WTC11 (cell line): ENCODE measurements at regions of chr9 and their contacts with region 1.

Region 1: DNA sequence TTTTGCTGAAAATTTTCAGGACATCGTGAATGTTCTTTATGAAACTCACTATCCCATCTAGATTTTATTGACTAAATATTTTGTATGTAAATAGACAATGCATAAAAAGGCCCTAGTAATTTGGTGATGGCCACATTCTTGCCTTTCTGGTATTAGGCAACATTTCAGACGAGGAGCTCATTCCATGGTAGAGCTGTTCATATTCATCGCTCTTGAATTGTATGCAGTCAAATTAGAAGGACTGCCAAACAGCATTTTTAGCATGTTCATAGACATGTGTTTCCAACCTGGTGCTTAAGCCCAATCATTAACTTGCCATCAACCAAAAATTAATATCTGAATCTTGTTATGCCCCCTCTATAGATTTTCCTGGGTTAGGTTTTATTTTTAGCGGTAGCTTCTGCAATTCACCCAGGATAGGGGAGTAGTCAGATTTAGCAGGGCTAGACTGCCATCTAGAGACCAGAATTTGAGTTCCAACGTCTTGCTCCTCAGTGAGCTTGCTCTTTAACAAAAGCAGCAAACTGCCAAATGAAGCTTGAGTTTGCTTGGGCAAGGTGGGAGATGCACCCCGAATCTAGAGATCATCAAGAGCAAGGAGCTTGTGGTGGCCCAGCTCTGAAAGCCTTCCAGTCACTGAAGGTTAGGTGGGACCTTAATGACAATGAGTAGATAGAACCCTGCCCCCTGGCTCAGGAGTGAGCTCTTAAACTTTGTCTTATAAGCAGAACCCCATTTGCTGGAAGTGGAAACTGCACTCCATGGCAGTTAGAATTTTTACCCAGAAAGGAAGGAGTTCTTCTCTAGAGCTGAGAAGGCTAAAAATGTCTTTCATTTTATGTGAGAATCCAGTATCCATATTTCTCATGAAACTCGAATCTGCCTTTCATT is 456.2 kb downstream of the RASEF start:
- DNase-seq: peak; percentile 48
- ATAC-seq: peak; percentile 96
- H3K4me3 Mint-ChIP-seq: no peak overlapping the region
- H3K27ac Mint-ChIP-seq: no peak overlapping the region
- H3K4me1 Mint-ChIP-seq: peaks cover 15% of the 10 kb centered on the region
- H3K27me3 Mint-ChIP-seq: no peaks in the 10 kb centered on the region
- CTCF ChIP-seq: 0 out of 2 replicates have a peak, but pooled peaks have one; percentile 30

Region 2: DNA sequence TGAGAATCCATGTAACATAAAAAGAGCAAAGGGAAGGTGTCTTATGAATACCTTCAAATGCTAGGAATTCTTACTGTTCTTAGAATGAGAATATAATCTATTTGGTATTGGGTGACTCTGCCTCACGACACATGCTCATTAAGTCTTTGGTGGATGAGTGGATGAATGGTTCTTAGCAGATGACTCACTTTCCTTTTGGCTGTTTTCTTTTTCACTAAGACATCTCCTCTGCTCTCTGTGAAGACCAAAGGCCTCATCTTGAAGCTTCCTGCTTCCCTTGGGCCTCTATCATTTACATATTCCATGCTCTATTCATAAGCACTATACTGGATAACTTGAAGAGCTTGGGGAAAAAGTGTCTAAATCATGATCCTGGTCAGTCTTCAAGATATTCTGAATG is 150.1 kb before region 1 on chr9:
- CTCF ChIA-PET with region 1: interaction called, 15 read pairs
- POLR2A ChIA-PET with region 1: no interaction called
- DNase-seq: no peak
- ATAC-seq: no peak
- H3K4me3 Mint-ChIP-seq: no peak overlapping the region
- H3K27ac Mint-ChIP-seq: no peak overlapping the region
- H3K4me1 Mint-ChIP-seq: peaks cover 14% of the 10 kb centered on the region
- H3K27me3 Mint-ChIP-seq: no peaks in the 10 kb centered on the region
- CTCF ChIP-seq: no peak

Region 3: DNA sequence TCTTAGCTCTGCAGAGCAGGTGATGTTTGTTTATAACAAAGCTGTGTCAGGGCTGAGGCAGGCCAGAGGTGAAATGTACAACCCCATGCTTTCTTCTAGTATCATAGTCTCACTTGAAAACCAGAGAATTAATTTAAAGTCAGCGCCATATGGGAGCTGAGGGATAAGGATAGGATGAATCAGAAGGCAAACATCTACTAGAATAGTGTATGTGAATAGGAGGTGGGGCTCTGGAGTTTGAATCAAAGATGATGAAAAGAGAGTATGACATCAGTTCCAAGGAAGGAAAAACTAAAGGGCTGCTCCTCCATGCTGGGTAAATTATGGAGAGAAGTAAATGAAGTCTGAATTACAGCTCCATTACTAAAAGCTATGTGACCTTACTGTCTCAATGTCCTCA is 14.7 kb after region 1 on chr9:
- CTCF ChIA-PET with region 1: interaction called, 22 read pairs
- POLR2A ChIA-PET with region 1: no interaction called
- DNase-seq: no peak
- ATAC-seq: no peak
- H3K4me3 Mint-ChIP-seq: no peak overlapping the region
- H3K27ac Mint-ChIP-seq: no peak overlapping the region
- H3K4me1 Mint-ChIP-seq: no peaks in the 10 kb centered on the region
- H3K27me3 Mint-ChIP-seq: no peaks in the 10 kb centered on the region
- CTCF ChIP-seq: no peak

Region 4: DNA sequence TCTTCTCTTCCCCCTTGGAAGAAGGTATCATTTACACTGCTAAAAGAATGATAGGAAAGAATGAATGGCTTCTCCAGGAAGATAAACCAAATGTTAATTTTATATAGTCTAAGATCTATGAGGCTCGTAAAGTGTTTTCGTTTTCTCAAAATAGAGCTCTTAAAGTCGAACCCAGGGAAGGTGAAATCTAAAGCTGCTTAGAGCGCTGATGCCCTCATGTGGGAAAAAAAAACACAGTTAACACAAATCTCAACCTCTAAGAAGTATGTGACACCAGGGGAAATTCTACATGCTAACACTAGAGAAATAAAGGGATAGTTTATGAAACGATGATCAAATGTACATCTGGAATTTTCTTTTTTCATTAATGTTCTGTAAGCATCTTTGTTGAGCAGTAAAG is 198.3 kb after region 1 on chr9:
- CTCF ChIA-PET with region 1: interaction called, 15 read pairs
- POLR2A ChIA-PET with region 1: no interaction called
- DNase-seq: no peak
- ATAC-seq: no peak
- H3K4me3 Mint-ChIP-seq: no peak overlapping the region
- H3K27ac Mint-ChIP-seq: no peak overlapping the region
- H3K4me1 Mint-ChIP-seq: peaks cover 45% of the 10 kb centered on the region
- H3K27me3 Mint-ChIP-seq: peaks cover 4% of the 10 kb centered on the region; the same call in 1 of the 2 replicates
- CTCF ChIP-seq: no peak

Region 5: DNA sequence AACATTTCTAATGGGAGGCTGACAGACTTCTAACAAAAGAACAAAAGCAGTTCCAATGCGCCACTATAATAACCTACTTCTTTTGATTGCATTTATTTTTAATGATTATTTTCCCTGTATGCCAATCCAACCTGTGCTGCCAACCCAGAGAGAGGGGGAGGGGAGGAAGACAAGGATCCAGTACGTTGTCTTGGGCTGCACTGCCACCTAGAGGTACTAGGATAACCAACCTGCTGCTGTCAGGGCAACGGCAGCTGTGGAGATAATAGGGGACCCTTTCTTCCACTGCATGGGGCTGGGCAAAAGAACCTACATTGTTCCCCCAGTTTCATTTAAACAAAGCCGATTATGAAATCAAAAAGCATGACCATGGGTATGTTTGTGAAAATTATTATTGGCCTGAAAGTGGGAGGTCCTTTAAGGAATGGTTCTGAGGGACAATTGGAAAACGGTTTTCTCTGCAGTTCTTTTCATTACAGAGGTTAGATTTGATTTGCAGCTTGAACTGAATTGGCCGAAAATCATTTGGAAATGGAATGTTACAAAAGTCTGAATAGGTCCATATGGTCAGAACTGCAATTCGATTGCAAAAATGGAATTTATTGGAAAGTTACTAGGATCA is 354.9 kb after region 1 on chr9:
- CTCF ChIA-PET with region 1: interaction called, 12 read pairs
- POLR2A ChIA-PET with region 1: no interaction called
- DNase-seq: peak; percentile 84
- ATAC-seq: peak; percentile 99
- H3K4me3 Mint-ChIP-seq: no peak overlapping the region
- H3K27ac Mint-ChIP-seq: no peak overlapping the region
- H3K4me1 Mint-ChIP-seq: peaks cover 24% of the 10 kb centered on the region
- H3K27me3 Mint-ChIP-seq: no peaks in the 10 kb centered on the region
- CTCF ChIP-seq: peak; percentile 81